Activated CD8-positive, alpha-beta memory T cell treated with anti-CD3 and anti-CD28 coated beads, Interleukin-2, amount 10 ng/mL, durations not matched to agents 7 days and 5 days (primary cell): ENCODE measurements at regions of chr15 and their contacts with region 1.

Region 1: GRCh38 chr15:44663409-44664308 is at the start of gene SPG11:
- DNase-seq: peak; percentile 99
- ATAC-seq: peak; percentile 82
- H3K4me3 Mint-ChIP-seq: peak within 1 kb of the TSS; percentile 99
- H3K27ac Mint-ChIP-seq: peak within 1 kb of the TSS; percentile 97
- H3K4me1 Mint-ChIP-seq: peaks cover 53% of the 10 kb centered on the region
- H3K27me3 Mint-ChIP-seq: no peaks in the 10 kb centered on the region
- total RNA-seq, gene SPG11: 76.7 to 95.8 TPM

Region 2: GRCh38 chr15:44102675-44103254 is 560.9 kb before region 1 on chr15:
- CTCF ChIA-PET with region 1: no interaction called
- DNase-seq: no peak
- ATAC-seq: no peak
- H3K4me3 Mint-ChIP-seq: no peak overlapping the region
- H3K27ac Mint-ChIP-seq: no peak overlapping the region
- H3K4me1 Mint-ChIP-seq: no peaks in the 10 kb centered on the region
- H3K27me3 Mint-ChIP-seq: peaks cover 42% of the 10 kb centered on the region

Region 3: GRCh38 chr15:44501768-44502366 is 161.8 kb before region 1 on chr15:
- CTCF ChIA-PET with region 1: no interaction called
- DNase-seq: no peak
- ATAC-seq: peak; percentile 71
- H3K4me3 Mint-ChIP-seq: no peak overlapping the region
- H3K27ac Mint-ChIP-seq: no peak overlapping the region
- H3K4me1 Mint-ChIP-seq: peaks cover 23% of the 10 kb centered on the region
- H3K27me3 Mint-ChIP-seq: no peaks in the 10 kb centered on the region

Region 4: GRCh38 chr15:44584162-44584749 is 79.4 kb before region 1 on chr15:
- CTCF ChIA-PET with region 1: interaction called, 19 read pairs
- DNase-seq: peak; percentile 73
- ATAC-seq: peak; percentile 86
- H3K4me3 Mint-ChIP-seq: no peak overlapping the region
- H3K27ac Mint-ChIP-seq: peak overlapping the region; percentile 49
- H3K4me1 Mint-ChIP-seq: peaks cover 4% of the 10 kb centered on the region
- H3K27me3 Mint-ChIP-seq: no peaks in the 10 kb centered on the region

Region 5: DNA sequence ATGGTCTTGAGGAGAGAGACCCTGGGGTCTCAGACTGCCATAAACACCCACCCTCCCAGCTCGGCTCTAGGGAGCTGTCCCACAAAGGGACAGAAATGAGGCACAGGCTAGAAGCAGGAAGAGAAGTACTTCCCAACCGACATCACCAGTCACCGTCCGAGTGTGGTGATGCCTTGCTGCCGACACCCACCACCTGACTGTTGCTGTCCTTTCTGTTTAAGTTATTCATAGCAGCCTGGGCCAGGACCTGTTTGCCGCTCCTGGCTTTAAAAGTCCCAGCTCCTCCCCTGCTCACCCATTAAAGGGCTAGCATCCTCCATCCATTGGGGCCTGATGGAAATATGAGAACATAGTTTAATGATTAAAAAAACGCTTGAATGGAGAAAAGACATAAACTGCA is 13.0 kb after region 1 on chr15:
- CTCF ChIA-PET with region 1: interaction called, 121 read pairs
- DNase-seq: peak; percentile 77
- ATAC-seq: peak; percentile 54
- H3K4me3 Mint-ChIP-seq: peak overlapping the region; percentile 60
- H3K27ac Mint-ChIP-seq: peak overlapping the region; percentile 92
- H3K4me1 Mint-ChIP-seq: peaks cover 76% of the 10 kb centered on the region
- H3K27me3 Mint-ChIP-seq: no peaks in the 10 kb centered on the region

Region 6: GRCh38 chr15:44694416-44694815 is 30.8 kb after region 1 on chr15:
- CTCF ChIA-PET with region 1: interaction called, 16 read pairs
- DNase-seq: no peak
- ATAC-seq: no peak
- H3K4me3 Mint-ChIP-seq: no peak overlapping the region
- H3K27ac Mint-ChIP-seq: no peak overlapping the region
- H3K4me1 Mint-ChIP-seq: peaks cover 20% of the 10 kb centered on the region
- H3K27me3 Mint-ChIP-seq: peaks cover 5% of the 10 kb centered on the region

Region 7: GRCh38 chr15:44711356-44712107 is 47.9 kb after region 1 on chr15 and contains the start of gene B2M:
- CTCF ChIA-PET with region 1: interaction called, 232 read pairs
- DNase-seq: peak; percentile 96
- ATAC-seq: peak; percentile 76
- H3K4me3 Mint-ChIP-seq: peak within 1 kb of the TSS; percentile 95
- H3K27ac Mint-ChIP-seq: peak within 1 kb of the TSS; percentile 100
- H3K4me1 Mint-ChIP-seq: peaks cover 42% of the 10 kb centered on the region
- H3K27me3 Mint-ChIP-seq: no peaks in the 10 kb centered on the region
- total RNA-seq, gene B2M: 6,920 to 7,161 TPM

Region 8: DNA sequence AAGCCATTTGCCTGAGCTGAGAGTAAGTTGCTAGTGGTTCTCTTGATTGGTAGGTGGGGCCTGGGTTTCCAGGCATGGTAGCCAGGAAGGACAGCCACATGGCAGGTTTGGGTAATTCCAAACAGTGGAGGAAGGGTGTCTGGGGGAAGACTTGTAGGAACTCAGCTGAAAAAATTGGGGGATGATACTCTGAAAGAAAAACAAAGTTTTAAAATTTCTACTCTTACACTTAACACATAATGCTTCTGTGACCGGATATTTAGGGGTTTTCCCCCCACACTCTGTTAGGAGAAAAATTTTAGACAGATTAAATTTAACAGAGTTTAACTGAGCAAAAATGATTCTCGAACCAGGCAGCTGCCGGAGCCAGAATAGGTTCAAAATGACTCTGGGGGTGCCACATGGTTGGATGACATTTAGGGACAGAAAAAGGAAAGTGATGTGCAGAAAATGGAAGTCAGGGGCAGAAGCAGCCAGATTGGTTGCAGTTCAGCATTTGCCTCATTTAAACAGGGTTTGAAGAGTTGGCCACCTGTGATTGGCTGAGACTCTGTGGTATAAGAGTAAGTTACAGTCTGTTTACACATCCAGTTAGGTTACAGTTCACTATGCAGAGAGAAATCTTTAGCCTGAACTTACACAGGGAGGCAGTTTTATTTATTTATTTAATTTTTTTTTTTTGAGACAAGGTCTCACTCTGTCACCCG is 55.8 kb after region 1 on chr15:
- CTCF ChIA-PET with region 1: interaction called, 232 read pairs
- DNase-seq: peak; percentile 88
- ATAC-seq: peak; percentile 65
- H3K4me3 Mint-ChIP-seq: peak overlapping the region; percentile 18
- H3K27ac Mint-ChIP-seq: peak overlapping the region; percentile 95
- H3K4me1 Mint-ChIP-seq: peaks cover 87% of the 10 kb centered on the region
- H3K27me3 Mint-ChIP-seq: no peaks in the 10 kb centered on the region

Region 9: DNA sequence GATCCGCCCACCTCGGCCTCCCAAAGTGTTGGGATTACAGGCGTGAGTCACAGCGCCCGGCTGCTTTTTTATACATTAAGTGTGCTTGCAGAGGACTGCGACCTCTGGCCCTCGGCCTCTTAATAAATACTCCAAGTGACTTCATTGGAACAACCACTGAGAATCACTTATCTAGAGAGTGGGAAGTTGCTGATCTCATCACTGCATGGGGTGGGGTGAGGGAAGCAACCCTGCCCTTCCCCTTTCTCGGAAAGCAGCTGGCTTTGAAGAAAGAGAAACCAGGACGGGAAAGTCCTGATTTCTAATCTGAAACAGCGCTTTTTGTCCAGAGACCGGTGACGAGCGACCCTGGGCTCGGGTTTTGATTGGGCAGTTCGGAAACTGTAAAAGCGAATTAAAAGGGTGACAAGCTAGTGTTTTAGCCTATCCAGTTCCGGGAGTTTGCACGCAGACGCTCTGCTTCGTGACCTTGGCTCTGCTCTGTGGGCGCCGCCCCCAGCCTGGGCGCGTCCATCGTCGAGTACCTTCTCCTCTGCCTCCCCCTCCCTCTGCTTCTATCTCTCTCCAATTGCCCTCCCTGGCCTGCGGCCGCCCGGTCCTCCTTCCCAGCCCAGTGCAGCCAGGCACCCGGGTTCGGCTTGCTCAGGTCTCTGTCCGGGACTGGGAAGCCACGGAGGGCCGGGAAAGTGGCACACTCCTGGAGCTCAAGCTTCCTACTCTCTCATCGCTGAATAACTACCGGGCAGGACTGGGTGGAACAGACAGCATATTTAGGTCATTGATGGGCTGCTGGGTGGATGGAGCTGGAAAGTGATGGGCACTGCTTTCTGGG is 65.1 kb after region 1 on chr15:
- CTCF ChIA-PET with region 1: interaction called, 112 read pairs
- DNase-seq: peak; percentile 98
- ATAC-seq: peak; percentile 80
- H3K4me3 Mint-ChIP-seq: peak overlapping the region; percentile 94
- H3K27ac Mint-ChIP-seq: peak overlapping the region; percentile 99
- H3K4me1 Mint-ChIP-seq: peaks cover 67% of the 10 kb centered on the region
- H3K27me3 Mint-ChIP-seq: no peaks in the 10 kb centered on the region

Region 10: GRCh38 chr15:44775953-44776352 is 112.3 kb after region 1 on chr15:
- CTCF ChIA-PET with region 1: no interaction called
- DNase-seq: no peak
- ATAC-seq: no peak
- H3K4me3 Mint-ChIP-seq: no peak overlapping the region
- H3K27ac Mint-ChIP-seq: no peak overlapping the region
- H3K4me1 Mint-ChIP-seq: peaks cover 4% of the 10 kb centered on the region
- H3K27me3 Mint-ChIP-seq: no peaks in the 10 kb centered on the region